ENCODE measurements at regions of chr3 and their contacts with region 1.

Region 1: GRCh38 chr3:49539659-49540560 is 14.4 kb upstream of the BSN start:
- DNase-seq: peak; percentile 45
- ATAC-seq: peak; percentile 98
- H3K4me3 ChIP-seq: peak overlapping the region; percentile 50; the same call in 1 of the 2 replicates
- H3K27ac ChIP-seq: no peak overlapping the region
- H3K4me1 ChIP-seq: peaks cover 5% of the 10 kb centered on the region; the same call in 1 of the 2 replicates
- H3K27me3 ChIP-seq: no peaks in the 10 kb centered on the region; a peak in 1 of 4 replicates
- CTCF ChIP-seq: peak; percentile 83 to 97 (median 93); a peak in 5 of 6 replicates
- EP300 ChIP-seq: no peak
- POLR2A ChIP-seq: 0 out of 2 replicates have a peak, but pooled peaks have one; percentile 36
- RAD21 ChIP-seq: peak; percentile 94

Region 2: DNA sequence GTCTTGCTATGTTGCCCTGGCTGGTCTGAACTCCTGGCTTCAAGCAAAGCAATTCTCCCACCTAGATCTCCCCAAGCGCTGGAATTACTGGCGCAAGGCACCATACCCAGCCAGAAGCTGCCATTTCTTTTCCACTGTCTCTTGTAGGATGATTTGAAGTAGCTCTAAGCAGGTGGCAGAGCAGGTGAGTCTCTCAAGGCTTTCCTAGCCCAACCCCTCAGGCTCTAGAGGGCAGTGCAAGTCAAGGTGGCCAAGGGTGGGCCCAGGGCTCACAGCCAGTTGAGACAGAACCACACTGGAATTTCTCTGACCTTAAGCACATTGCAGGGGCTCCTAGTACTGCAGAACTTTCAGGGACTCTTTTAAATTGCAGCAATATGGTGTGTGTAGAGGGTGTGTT is 85.5 kb before region 1 on chr3:
- CTCF ChIA-PET with region 1: interaction called, 11 read pairs
- POLR2A ChIA-PET with region 1: no interaction called
- RAD21 ChIA-PET with region 1: interaction called, 5 read pairs
- SMC1A ChIA-PET with region 1: no interaction called
- in situ Hi-C with region 1: no loop called
- intact Hi-C with region 1: no loop called
- DNase-seq: no peak
- ATAC-seq: peak; percentile 73
- H3K4me3 ChIP-seq: no peak overlapping the region
- H3K27ac ChIP-seq: no peak overlapping the region
- H3K4me1 ChIP-seq: no peaks in the 10 kb centered on the region
- H3K27me3 ChIP-seq: no peaks in the 10 kb centered on the region
- CTCF ChIP-seq: peak; percentile 36 to 49 (median 43); a peak in 5 of 6 replicates
- EP300 ChIP-seq: no peak
- POLR2A ChIP-seq: no peak
- RAD21 ChIP-seq: peak; percentile 60

Region 3: GRCh38 chr3:49523756-49524747 is 15.9 kb before region 1 on chr3:
- CTCF ChIA-PET with region 1: interaction called, 17 read pairs
- POLR2A ChIA-PET with region 1: no interaction called
- RAD21 ChIA-PET with region 1: interaction called, 3 read pairs
- SMC1A ChIA-PET with region 1: interaction called, 3 read pairs
- in situ Hi-C with region 1: no loop called
- intact Hi-C with region 1: no loop called
- DNase-seq: no peak
- ATAC-seq: no peak
- H3K4me3 ChIP-seq: no peak overlapping the region
- H3K27ac ChIP-seq: 0 out of 2 replicates have a peak overlapping the region, but pooled peaks have one; percentile 14
- H3K4me1 ChIP-seq: peaks cover 13% of the 10 kb centered on the region; the same call in 1 of the 2 replicates
- H3K27me3 ChIP-seq: no peaks in the 10 kb centered on the region
- CTCF ChIP-seq: no peak
- EP300 ChIP-seq: no peak
- POLR2A ChIP-seq: no peak
- RAD21 ChIP-seq: no peak

Region 4: DNA sequence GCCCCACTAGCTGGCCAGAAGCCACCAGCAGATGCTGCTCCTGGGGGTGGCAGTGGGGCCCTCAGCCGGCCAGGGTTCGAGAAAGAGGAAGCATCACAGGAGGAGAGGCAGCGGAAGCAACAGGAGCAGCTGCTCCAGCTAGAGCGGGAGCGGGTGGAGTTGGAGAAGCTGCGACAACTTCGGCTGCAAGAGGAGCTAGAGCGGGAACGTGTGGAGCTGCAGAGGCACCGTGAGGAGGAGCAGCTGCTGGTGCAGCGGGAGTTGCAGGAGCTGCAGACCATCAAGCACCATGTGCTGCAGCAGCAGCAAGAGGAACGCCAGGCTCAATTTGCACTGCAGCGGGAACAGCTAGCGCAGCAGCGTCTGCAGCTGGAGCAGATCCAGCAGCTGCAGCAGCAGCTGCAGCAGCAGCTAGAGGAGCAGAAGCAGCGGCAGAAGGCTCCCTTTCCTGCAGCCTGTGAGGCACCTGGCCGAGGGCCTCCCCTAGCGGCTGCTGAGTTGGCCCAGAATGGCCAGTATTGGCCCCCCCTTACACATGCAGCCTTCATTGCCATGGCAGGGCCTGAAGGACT is 116.7 kb after region 1 on chr3:
- CTCF ChIA-PET with region 1: interaction called, 8 read pairs
- POLR2A ChIA-PET with region 1: no interaction called
- RAD21 ChIA-PET with region 1: interaction called, 13 read pairs
- SMC1A ChIA-PET with region 1: interaction called, 3 read pairs
- in situ Hi-C with region 1: no loop called
- intact Hi-C with region 1: no loop called
- DNase-seq: no peak
- ATAC-seq: peak; percentile 55; the same call in 2 of the 3 replicates
- H3K4me3 ChIP-seq: no peak overlapping the region
- H3K27ac ChIP-seq: no peak overlapping the region
- H3K4me1 ChIP-seq: no peaks in the 10 kb centered on the region
- H3K27me3 ChIP-seq: no peaks in the 10 kb centered on the region
- CTCF ChIP-seq: peak in 2 of 3 experiments; percentile 23 to 35; a peak in 3 of 6 replicates
- EP300 ChIP-seq: no peak
- POLR2A ChIP-seq: no peak
- RAD21 ChIP-seq: no peak

Region 5: DNA sequence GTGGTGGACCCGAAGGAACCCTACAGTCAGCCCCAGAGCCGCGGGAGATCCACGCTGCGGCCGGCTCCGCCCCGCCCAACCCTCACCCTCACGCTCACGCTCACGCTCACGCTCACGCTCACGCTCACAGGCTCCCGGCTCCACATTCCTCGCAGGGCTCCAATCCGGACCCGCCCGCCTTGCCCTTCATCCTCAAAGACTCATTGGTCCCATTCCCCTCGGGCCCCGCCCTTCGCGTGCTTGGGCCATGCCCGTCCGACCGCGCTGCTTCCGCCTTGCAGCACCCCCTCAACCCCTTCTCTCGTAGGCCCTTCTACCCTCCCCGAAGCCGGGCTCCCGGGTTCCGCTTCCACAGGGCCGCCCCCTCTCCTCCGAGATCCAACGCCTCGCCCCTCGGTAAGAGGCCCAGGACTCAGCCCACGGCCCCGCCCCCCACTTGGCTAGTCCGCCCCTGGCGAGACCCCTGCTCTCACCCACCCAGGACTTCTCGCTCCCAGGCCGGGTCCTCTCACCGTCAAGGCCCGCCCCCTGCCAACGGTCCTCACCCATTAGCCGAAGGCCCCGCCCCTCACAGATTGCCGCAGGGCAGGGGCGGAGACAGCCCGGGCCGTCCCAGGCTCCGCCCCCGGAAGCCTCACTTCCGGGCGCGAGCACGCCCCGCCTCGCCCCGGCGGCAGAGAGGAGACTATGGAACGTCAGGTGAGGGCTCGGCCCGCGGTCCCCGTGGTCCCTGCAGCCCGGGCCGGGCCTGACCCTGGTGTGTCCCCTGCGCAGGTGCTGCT is 134.0 kb after region 1 on chr3 and contains the start of gene APEH:
- CTCF ChIA-PET with region 1: interaction called, 210 read pairs
- POLR2A ChIA-PET with region 1: interaction called, 10 read pairs
- RAD21 ChIA-PET with region 1: interaction called, 89 read pairs
- SMC1A ChIA-PET with region 1: interaction called, 86 read pairs
- in situ Hi-C with region 1: loop called (anchors 10 kb)
- intact Hi-C with region 1: loop called (anchors 1 kb)
- DNase-seq: peak; percentile 95
- ATAC-seq: peak; percentile 91
- H3K4me3 ChIP-seq: peak within 1 kb of the TSS; percentile 94
- H3K27ac ChIP-seq: peak within 1 kb of the TSS; percentile 86
- H3K4me1 ChIP-seq: peaks cover 10% of the 10 kb centered on the region
- H3K27me3 ChIP-seq: no peaks in the 10 kb centered on the region
- CTCF ChIP-seq: no peak
- EP300 ChIP-seq: no peak; a peak in 1 of 4 replicates
- POLR2A ChIP-seq: peak; percentile 90
- RAD21 ChIP-seq: no peak
- polyA plus RNA-seq, gene APEH: 74.4 to 102 TPM

Region 6: GRCh38 chr3:49839193-49839809 is 299.4 kb after region 1 on chr3:
- CTCF ChIA-PET with region 1: interaction called, 17 read pairs
- POLR2A ChIA-PET with region 1: no interaction called
- RAD21 ChIA-PET with region 1: interaction called, 12 read pairs
- SMC1A ChIA-PET with region 1: interaction called, 3 read pairs
- in situ Hi-C with region 1: no loop called
- intact Hi-C with region 1: no loop called
- DNase-seq: peak; percentile 23
- ATAC-seq: peak; percentile 99
- H3K4me3 ChIP-seq: no peak overlapping the region
- H3K27ac ChIP-seq: no peak overlapping the region
- H3K4me1 ChIP-seq: no peaks in the 10 kb centered on the region
- H3K27me3 ChIP-seq: no peaks in the 10 kb centered on the region
- CTCF ChIP-seq: peak; percentile 84 to 96 (median 89)
- EP300 ChIP-seq: no peak
- POLR2A ChIP-seq: no peak
- RAD21 ChIP-seq: peak; percentile 96